ENCODE measurements at regions of chr2 and their contacts with region 1.

Region 1: GRCh38 chr2:154399839-154400238 is 298.7 kb upstream of the KCNJ3 start:
- DNase-seq: no peak
- ATAC-seq: no peak
- H3K4me3 ChIP-seq: no peak overlapping the region
- H3K27ac ChIP-seq: no peak overlapping the region
- H3K4me1 ChIP-seq: no peaks in the 10 kb centered on the region
- H3K27me3 ChIP-seq: no peaks in the 10 kb centered on the region
- CTCF ChIP-seq: no peak

Region 2: GRCh38 chr2:154161286-154161685 is 238.6 kb before region 1 on chr2:
- intact Hi-C with region 1: loop called in 1 of 10 experiments (anchors 5 kb)
- DNase-seq: no peak
- ATAC-seq: no peak
- H3K4me3 ChIP-seq: no peak overlapping the region
- H3K27ac ChIP-seq: no peak overlapping the region
- H3K4me1 ChIP-seq: no peaks in the 10 kb centered on the region
- H3K27me3 ChIP-seq: no peaks in the 10 kb centered on the region
- CTCF ChIP-seq: no peak